Mammary epithelial cell (primary cell): ENCODE measurements at regions of chr11 and their contacts with region 1.

Region 1: DNA sequence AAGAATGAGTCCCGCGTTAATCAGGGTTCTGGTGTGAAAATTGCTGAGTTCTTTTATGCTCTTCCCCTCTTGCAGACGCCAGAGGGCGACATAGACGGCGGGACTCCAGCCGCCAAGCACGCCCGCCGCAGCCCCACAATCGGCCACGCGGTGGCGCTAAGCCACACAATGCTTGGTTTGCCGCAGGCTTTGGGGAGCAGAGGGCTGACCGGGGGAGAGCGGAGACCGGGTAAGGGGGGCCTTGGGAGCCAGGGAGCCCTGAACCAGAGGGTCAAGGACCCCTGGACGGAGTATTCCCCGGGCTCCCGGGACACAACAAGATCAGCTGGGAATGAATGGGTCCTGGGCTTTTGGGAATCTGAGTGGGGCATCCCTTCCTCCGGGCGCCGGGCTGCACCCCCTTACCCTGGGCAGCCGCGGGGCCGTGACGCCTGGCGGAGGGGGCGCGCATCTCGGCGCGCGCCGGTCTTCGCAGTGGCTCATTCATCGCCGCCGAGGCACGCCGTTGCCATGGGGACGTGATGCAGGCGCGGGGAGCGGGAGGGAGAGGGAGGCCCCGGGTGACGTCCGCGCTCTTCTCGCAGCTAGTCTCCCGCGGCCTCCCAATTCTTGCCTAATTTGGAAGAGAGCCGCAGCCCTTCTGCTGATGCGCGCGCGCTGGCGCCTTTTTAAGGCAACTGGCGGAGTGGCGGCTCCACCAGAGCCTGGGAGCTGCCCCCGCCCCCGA is 12.2 kb upstream of the NPAS4 start:
- DNase-seq: peak; percentile 76
- H3K4me3 ChIP-seq: peak overlapping the region in 2 of 3 experiments; percentile 18 to 29
- H3K27ac ChIP-seq: no peak overlapping the region
- H3K4me1 ChIP-seq: peaks cover 4% of the 10 kb centered on the region
- H3K27me3 ChIP-seq: no peaks in the 10 kb centered on the region
- CTCF ChIP-seq: peak; percentile 99 to 100

Region 2: GRCh38 chr11:66429983-66430602 is 21.4 kb after region 1 on chr11:
- CTCF ChIA-PET with region 1: no interaction called
- dilution Hi-C with region 1: no loop called
- in situ Hi-C with region 1: no loop called
- intact Hi-C with region 1: loop called (anchors 1 kb)
- DNase-seq: peak; percentile 39
- H3K4me3 ChIP-seq: no peak overlapping the region
- H3K27ac ChIP-seq: no peak overlapping the region
- H3K4me1 ChIP-seq: no peaks in the 10 kb centered on the region
- H3K27me3 ChIP-seq: no peaks in the 10 kb centered on the region
- CTCF ChIP-seq: peak; percentile 80 to 89

Region 3: GRCh38 chr11:66438504-66439466 is 30.1 kb after region 1 on chr11 and contains the start of gene MRPL11:
- CTCF ChIA-PET with region 1: interaction called, 4 read pairs
- dilution Hi-C with region 1: no loop called
- in situ Hi-C with region 1: no loop called
- intact Hi-C with region 1: loop called (anchors 2 kb)
- DNase-seq: peak; percentile 90
- H3K4me3 ChIP-seq: peak within 1 kb of the TSS; percentile 53 to 87 (median 80)
- H3K27ac ChIP-seq: peak within 1 kb of the TSS; percentile 64
- H3K4me1 ChIP-seq: peaks cover 7% of the 10 kb centered on the region
- H3K27me3 ChIP-seq: no peaks in the 10 kb centered on the region
- CTCF ChIP-seq: peak; percentile 60 to 74
- total RNA-seq, gene MRPL11: 19.8 to 47.6 TPM

Region 4: GRCh38 chr11:66480117-66480938 is 71.7 kb after region 1 on chr11 and contains the start of gene DPP3:
- CTCF ChIA-PET with region 1: no interaction called
- dilution Hi-C with region 1: no loop called
- in situ Hi-C with region 1: loop called in 1 of 2 experiments (anchors 10 kb)
- intact Hi-C with region 1: loop called (anchors 1 kb)
- DNase-seq: peak; percentile 97
- H3K4me3 ChIP-seq: peak within 1 kb of the TSS; percentile 52 to 75 (median 68)
- H3K27ac ChIP-seq: peak within 1 kb of the TSS; percentile 83
- H3K4me1 ChIP-seq: peaks cover 10% of the 10 kb centered on the region
- H3K27me3 ChIP-seq: no peaks in the 10 kb centered on the region
- CTCF ChIP-seq: no peak
- total RNA-seq, gene DPP3: 54.3 to 59.8 TPM

Region 5: DNA sequence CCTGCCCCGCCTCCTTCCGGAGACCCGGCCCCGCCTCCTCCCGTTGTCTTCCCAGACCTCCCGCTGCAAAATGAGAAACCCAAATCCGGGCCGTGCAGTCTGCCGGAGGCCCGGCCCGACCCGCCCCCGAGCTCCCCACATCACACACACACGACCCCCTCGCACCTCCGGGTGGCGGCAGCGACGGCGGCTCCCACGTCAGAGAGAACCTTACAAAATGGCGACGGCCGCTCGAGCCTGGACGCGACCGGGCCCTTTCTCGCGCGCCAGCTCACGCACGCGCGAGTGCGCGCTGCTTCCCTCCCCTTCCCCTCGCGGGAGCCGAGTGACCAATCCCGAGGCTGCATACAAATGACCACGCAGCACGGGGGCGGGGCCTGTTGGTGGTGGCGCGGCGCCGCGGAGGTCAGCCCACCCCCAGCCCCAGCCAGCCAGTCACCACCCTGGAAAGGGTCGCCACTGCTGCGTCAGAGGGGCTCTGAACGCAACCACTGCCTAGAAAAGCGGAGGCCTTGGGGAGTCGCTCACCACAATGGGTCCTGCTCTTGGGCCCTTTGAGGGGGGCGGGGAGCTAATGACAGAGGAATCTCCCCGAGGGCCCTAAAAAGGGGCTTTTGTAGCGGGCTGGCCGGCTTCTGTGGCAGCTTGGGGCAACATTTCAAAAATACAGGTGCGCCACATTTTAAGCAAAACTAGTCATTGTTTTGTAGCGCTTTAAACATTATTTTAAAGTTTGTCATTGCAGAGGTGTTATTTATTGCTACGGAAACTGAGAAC is 269.1 kb after region 1 on chr11 and contains the start of gene RBM4B:
- CTCF ChIA-PET with region 1: no interaction called
- dilution Hi-C with region 1: loop called (anchors 25 kb)
- in situ Hi-C with region 1: loop called in 1 of 2 experiments (anchors 25 kb)
- intact Hi-C with region 1: loop called (anchors 1 kb)
- DNase-seq: peak; percentile 89
- H3K4me3 ChIP-seq: peak within 1 kb of the TSS; percentile 51 to 84 (median 75)
- H3K27ac ChIP-seq: peak within 1 kb of the TSS; percentile 93
- H3K4me1 ChIP-seq: peaks cover 18% of the 10 kb centered on the region
- H3K27me3 ChIP-seq: no peaks in the 10 kb centered on the region
- CTCF ChIP-seq: no peak
- total RNA-seq, gene RBM4B: 12.2 to 15.3 TPM

Region 6: DNA sequence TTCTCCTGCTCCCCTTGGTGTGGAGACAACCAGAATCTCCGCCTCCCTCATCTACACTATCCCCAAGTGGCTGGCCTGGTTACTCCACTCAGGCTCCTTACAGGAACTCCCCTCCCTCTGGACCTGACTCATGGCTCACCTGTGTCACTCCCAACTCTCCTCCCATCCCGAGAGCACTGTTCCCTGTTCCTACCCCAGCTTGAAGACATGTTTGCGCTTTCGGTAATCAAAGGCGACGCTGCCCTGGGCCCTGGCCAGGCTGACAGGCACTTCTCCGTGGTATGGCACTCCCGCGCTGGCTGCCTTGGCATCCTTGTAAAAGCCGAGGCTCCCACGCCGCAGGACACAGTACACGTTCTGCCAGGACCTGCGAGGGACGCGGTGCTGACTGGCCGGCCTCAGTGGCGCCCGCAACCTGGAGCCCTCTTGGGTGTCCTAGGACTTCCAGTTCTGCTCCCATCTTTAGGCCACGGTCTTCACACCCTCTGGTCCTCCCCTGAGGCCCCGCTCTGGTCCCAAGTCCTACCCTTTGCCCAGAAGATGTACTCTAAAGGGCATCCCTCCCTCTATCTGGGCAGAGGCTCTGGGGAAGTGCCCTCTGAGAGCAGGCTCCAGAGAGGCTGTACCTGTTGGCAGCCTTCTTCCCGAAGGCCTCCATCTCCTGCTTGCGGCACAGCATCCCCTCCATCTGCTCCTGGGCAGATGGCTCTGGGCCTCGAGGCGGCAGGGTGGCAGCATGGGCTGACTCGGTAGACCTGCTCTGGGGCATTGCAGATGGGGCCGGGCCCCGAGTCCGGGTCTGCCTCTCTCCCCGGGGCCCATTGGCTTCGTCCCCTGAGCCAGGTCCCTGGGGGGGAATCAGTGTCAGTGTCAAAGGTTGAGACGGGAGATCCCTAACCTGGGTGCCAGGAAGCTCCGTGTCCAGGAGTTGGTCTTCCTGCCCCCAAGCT is 278.4 kb after region 1 on chr11:
- CTCF ChIA-PET with region 1: interaction called, 3 read pairs
- dilution Hi-C with region 1: loop called (anchors 25 kb)
- in situ Hi-C with region 1: loop called in 1 of 2 experiments (anchors 25 kb)
- intact Hi-C with region 1: loop called (anchors 2 kb)
- DNase-seq: peak; percentile 88
- H3K4me3 ChIP-seq: peak overlapping the region in 2 of 3 experiments; percentile 31 to 39
- H3K27ac ChIP-seq: peak overlapping the region; percentile 90
- H3K4me1 ChIP-seq: peaks cover 26% of the 10 kb centered on the region
- H3K27me3 ChIP-seq: no peaks in the 10 kb centered on the region
- CTCF ChIP-seq: peak in 1 of 2 donors; percentile 22

Region 7: DNA sequence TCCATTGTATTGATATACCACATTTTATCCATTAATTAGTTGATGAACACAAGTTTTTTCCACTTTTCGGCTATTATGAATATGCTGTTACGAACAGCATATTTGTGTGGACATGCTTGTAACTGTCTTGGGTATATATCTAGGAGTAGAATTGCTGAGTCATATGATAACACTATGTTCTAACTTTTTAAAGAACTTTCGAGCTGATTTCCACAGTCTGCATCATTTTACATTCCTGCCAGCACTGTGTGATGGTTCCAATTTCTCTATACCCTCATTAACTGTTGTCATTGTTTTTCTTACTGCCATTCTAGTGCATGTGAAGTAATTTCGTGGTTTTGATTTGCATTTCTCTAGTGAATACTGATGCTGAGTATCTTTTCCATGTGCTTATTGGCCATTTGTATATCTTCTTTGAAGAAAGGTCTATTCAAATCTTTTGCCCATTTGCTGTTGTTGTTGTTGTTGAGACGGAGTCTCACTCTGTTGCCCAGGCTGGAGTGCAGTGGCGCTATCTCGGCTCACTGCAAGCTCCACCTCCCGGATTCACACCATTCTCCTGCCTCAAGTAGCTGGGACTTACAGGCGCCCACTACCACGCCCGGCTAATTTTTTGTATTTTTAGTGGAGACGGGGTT is 427.2 kb after region 1 on chr11:
- CTCF ChIA-PET with region 1: no interaction called
- dilution Hi-C with region 1: no loop called
- in situ Hi-C with region 1: no loop called
- intact Hi-C with region 1: loop called (anchors 1 kb)
- DNase-seq: no peak
- H3K4me3 ChIP-seq: no peak overlapping the region
- H3K27ac ChIP-seq: no peak overlapping the region
- H3K4me1 ChIP-seq: no peaks in the 10 kb centered on the region
- H3K27me3 ChIP-seq: no peaks in the 10 kb centered on the region
- CTCF ChIP-seq: no peak